ENCODE measurements at regions of chr4 and their contacts with region 1.

Region 1: DNA sequence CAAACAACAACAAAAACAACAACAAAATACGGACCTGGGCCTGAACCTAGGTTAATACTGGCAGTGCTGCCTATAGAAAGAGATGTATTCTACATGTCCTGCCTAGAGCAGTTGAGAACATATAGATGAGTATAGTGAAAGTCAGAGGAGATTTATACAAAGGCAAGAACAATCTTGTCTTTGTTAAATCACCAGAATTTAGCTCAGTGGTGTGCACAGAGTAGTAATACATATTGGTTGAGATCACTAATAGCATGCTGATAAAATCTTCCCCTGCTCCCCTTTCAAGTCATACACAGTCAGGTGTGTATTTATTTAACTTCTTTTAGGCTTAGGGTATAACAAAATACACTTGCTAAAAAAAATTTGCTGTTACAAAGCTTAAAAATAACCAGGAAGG is 247.8 kb downstream of the ADGRL3 start:
- DNase-seq: no peak
- H3K4me3 ChIP-seq: no peak overlapping the region
- H3K27ac ChIP-seq: no peak overlapping the region
- H3K4me1 ChIP-seq: no peaks in the 10 kb centered on the region
- H3K27me3 ChIP-seq: no peaks in the 10 kb centered on the region
- CTCF ChIP-seq: no peak
- EP300 ChIP-seq: no peak
- POLR2A ChIP-seq: no peak

Region 2: DNA sequence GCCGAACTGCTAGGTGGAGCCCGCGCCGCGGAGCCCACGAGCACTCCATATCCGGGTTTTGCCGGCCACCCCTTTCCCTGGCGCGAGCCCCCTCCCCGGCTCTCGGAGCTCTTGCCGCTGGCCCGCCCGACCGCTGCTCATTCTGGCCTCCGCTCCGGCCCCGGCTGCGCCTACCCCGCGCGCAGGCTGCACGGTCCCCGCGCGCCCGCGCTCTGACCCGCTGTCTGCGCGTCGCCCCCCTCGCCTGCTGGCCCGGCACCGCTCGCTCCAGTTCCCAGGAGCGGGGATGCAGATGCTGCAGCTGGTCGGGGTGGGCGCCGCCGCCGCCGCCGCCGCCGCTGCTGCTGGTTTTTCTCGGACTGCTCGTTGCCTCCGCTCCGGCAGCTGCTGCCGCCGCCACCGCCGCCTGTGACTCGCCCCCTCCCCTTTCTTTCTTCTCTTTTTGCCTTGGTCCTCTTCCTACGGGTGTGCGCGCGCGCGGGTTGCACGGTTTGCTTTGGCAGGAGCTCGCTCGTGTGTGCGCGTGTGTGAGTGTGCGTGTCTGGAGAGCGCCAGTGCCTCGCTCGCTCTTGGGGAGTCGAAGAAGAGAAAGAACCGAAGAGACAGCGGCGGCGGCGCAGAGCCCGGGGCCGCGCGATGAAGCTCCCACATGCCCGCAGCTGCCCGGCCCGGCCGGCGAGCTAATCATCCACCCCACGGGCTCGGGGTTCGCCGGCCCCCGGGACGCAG is 247.6 kb before region 1 on chr4 and contains the start of gene ADGRL3:
- in situ Hi-C with region 1: no loop called
- intact Hi-C with region 1: no loop called
- DNase-seq: no peak
- H3K4me3 ChIP-seq: peak within 1 kb of the TSS; percentile 24 to 59 (median 36)
- H3K27ac ChIP-seq: peak within 1 kb of the TSS; percentile 35 to 70 (median 62)
- H3K4me1 ChIP-seq: peaks cover 0 to 4% (median 1%) of the 10 kb centered on the region in 4 donors
- H3K27me3 ChIP-seq: peaks cover 58% of the 10 kb centered on the region
- CTCF ChIP-seq: no peak
- EP300 ChIP-seq: no peak
- POLR2A ChIP-seq: no peak
- total RNA-seq, gene ADGRL3: 2.2 to 10.0 (median 4.6) TPM

Region 3: GRCh38 chr4:61520681-61521160 is 72.8 kb after region 1 on chr4:
- in situ Hi-C with region 1: no loop called
- intact Hi-C with region 1: loop called (anchors 2 kb)
- DNase-seq: no peak
- H3K4me3 ChIP-seq: no peak overlapping the region
- H3K27ac ChIP-seq: no peak overlapping the region
- H3K4me1 ChIP-seq: no peaks in the 10 kb centered on the region
- H3K27me3 ChIP-seq: no peaks in the 10 kb centered on the region
- CTCF ChIP-seq: no peak
- EP300 ChIP-seq: no peak
- POLR2A ChIP-seq: no peak